Heart right ventricle (tissue), 16 donors: ENCODE measurements at regions of chr15 and their contacts with region 1.

Region 1: DNA sequence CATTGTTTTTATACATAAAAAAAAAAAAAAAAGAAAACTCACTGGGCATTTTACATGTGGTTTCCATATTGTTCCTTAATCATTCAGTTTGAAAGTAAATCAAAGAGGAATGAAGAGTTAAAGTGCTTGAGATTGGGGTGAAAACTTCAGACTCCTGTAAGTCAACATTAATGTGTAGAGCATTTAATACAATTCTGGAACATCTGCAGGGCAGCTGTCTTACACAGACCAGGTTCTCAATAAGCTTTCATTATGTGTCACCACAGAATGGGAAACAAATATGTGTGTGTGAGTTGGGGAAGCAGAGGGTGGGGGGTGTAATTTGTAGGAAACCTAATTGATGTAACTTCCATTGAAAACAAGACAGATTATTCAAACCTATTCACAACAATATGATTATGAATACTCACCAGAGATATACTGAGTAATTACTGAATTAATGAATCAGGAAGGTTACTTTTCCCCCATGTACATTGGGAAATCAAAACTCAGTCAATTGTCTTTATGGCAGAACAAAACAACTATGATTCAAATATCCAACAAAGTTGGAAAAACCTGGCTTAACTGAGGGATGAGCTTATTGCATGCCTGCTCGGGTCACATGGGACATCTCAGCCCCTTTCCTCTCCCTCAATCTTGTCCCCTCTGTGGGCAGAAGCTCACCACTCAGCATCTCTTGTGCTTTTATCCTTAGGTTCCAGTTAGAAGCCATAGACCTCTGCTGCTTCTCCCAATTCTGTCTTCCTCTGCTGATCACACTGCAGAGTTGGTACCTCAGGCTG is 281.2 kb upstream of the THBS1 start:
- DNase-seq: no peak
- ATAC-seq: no peak
- H3K4me3 ChIP-seq: no peak overlapping the region
- H3K27ac ChIP-seq: no peak overlapping the region
- H3K4me1 ChIP-seq: peaks cover 0 to 4% (median 0%) of the 10 kb centered on the region in 9 donors
- H3K27me3 ChIP-seq: peaks cover 0 to 11% (median 0%) of the 10 kb centered on the region in 7 donors
- CTCF ChIP-seq: no peak

Region 2: GRCh38 chr15:39248204-39248603 is 51.5 kb before region 1 on chr15:
- intact Hi-C with region 1: loop called in 1 of 10 experiments (anchors 10 kb)
- DNase-seq: peak; percentile 31 to 59
- ATAC-seq: peak in 7 of 8 donors; percentile 64 to 89 (median 76)
- H3K4me3 ChIP-seq: no peak overlapping the region
- H3K27ac ChIP-seq: peak overlapping the region in 4 of 10 donors; percentile 35 to 73 (median 41)
- H3K4me1 ChIP-seq: peaks cover 0 to 33% (median 11%) of the 10 kb centered on the region in 9 donors
- H3K27me3 ChIP-seq: no peaks in the 10 kb centered on the region
- CTCF ChIP-seq: no peak

Region 3: GRCh38 chr15:39354189-39354588 is 54.5 kb after region 1 on chr15:
- intact Hi-C with region 1: no loop called
- DNase-seq: no peak
- ATAC-seq: no peak
- H3K4me3 ChIP-seq: no peak overlapping the region
- H3K27ac ChIP-seq: no peak overlapping the region
- H3K4me1 ChIP-seq: peaks cover 5 to 32% (median 16%) of the 10 kb centered on the region in 9 donors
- H3K27me3 ChIP-seq: no peaks in the 10 kb centered on the region
- CTCF ChIP-seq: no peak